ENCODE measurements at regions of chr9 and their contacts with region 1.

Region 1: GRCh38 chr9:69759421-69760277 is at the start of gene PTAR1:
- DNase-seq: peak; percentile 80 to 95 (median 89)
- ATAC-seq: peak; percentile 93
- H3K4me3 ChIP-seq: peak within 1 kb of the TSS; percentile 76
- H3K4me3 Mint-ChIP-seq: peak within 1 kb of the TSS; percentile 87 to 99 (median 96)
- H3K27ac ChIP-seq: peak within 1 kb of the TSS; percentile 93
- H3K27ac Mint-ChIP-seq: peak within 1 kb of the TSS; percentile 85 to 98 (median 94)
- H3K4me1 ChIP-seq: peaks cover 7 to 16% of the 10 kb centered on the region in 2 donors
- H3K4me1 Mint-ChIP-seq: peaks cover 14 to 51% (median 35%) of the 10 kb centered on the region in 7 donors
- H3K27me3 ChIP-seq: no peaks in the 10 kb centered on the region
- H3K27me3 Mint-ChIP-seq: no peaks in the 10 kb centered on the region
- total RNA-seq, gene PTAR1: 59.6 to 82.4 (median 65.7) TPM

Region 2: DNA sequence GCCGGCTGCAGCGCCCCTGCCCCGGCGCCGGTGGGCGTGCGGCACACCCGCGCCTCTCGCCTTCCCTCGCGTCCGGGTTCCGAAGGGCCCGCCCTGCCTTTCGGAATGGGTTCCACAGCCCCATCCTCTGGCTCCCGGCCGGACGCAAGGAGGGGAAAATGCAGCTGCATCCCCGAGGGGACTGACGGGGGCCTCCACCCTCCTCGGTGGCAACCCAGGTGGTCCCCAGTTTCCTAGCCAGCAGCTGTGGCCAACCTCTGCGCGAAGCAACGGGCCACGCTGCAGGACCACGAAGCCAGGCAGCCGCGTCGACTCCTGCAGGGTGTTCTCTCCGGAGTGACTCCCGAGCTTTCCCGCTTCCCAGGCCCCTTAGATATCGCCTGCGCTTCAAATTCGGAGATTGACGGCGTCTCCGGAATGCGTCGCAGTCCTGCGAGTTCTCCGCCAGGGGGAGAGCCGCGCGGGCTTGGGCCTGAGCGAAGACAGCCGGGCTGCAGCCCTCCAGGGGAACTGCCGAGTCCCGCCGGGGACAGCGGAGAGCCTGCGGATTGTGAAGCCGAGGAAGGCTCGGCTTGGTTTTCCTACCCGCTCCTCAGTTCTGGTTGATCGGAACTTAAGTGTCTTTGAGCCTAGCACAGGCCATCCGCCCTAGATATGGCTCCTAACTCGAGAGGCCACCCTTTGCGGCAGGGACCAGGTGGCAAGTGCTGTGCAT is 86.9 kb before region 1 on chr9:
- CTCF ChIA-PET with region 1: no interaction called
- POLR2A ChIA-PET with region 1: interaction called, 5 read pairs
- intact Hi-C with region 1: loop called (anchors 1 kb)
- DNase-seq: peak; percentile 51 to 78 (median 70)
- ATAC-seq: peak; percentile 88
- H3K4me3 ChIP-seq: peak overlapping the region; percentile 84
- H3K4me3 Mint-ChIP-seq: peak overlapping the region; percentile 80 to 91 (median 86)
- H3K27ac ChIP-seq: no peak overlapping the region
- H3K27ac Mint-ChIP-seq: peak overlapping the region in 7 of 9 donors; percentile 17 to 62 (median 59)
- H3K4me1 ChIP-seq: peaks cover 5 to 6% of the 10 kb centered on the region in 2 donors
- H3K4me1 Mint-ChIP-seq: peaks cover 0 to 35% (median 28%) of the 10 kb centered on the region in 7 donors
- H3K27me3 ChIP-seq: no peaks in the 10 kb centered on the region
- H3K27me3 Mint-ChIP-seq: peaks cover 0 to 47% (median 9%) of the 10 kb centered on the region in 5 donors

Region 3: DNA sequence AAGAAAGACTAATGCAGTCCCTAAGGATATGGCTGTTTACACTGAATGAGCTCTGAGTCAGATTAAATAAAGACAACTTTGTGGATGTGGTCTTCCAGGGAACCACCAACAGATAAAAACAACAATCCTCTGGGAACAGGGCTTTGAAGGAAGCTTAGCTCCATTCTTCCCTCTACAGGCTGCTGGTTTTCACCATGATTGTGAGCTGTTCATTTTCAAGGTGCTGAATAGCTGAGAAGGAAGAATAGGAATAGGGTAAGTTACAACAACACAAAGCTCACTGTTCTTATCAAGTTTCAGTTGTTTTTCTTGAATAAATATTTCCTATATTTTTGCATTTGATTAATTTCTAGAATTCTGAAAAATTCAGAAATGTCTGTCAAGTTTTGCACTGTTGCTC is 26.1 kb after region 1 on chr9:
- CTCF ChIA-PET with region 1: no interaction called
- POLR2A ChIA-PET with region 1: no interaction called
- intact Hi-C with region 1: loop called in 1 of 2 experiments (anchors 2 kb)
- DNase-seq: no peak
- ATAC-seq: no peak
- H3K4me3 ChIP-seq: no peak overlapping the region
- H3K4me3 Mint-ChIP-seq: no peak overlapping the region
- H3K27ac ChIP-seq: no peak overlapping the region
- H3K27ac Mint-ChIP-seq: no peak overlapping the region
- H3K4me1 ChIP-seq: no peaks in the 10 kb centered on the region
- H3K4me1 Mint-ChIP-seq: no peaks in the 10 kb centered on the region
- H3K27me3 ChIP-seq: no peaks in the 10 kb centered on the region
- H3K27me3 Mint-ChIP-seq: peaks cover 17 to 39% (median 20%) of the 10 kb centered on the region in 5 donors

Region 4: DNA sequence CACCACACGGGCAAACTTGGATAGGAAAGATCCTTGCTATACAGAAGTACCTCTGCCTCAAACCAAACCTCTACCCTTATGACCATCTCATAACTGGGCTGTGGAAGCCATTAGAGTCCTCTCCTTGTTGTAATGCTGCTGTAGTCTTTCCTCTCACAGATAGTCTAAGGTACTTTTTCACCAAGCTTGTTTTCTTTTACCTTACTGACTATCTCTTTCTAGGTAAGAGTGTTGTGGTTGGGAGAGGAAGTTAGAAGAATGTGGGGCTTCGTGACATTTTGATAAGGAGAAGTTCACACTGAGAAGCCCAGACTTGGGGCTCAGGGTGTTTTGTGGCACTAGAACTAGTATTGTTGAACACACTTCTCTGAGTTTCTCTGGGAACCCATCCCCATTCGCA is 69.8 kb after region 1 on chr9:
- CTCF ChIA-PET with region 1: interaction called, 4 read pairs
- POLR2A ChIA-PET with region 1: no interaction called
- intact Hi-C with region 1: loop called (anchors 2 kb)
- DNase-seq: peak in 6 of 9 donors; percentile 10 to 37 (median 28)
- ATAC-seq: peak; percentile 71
- H3K4me3 ChIP-seq: no peak overlapping the region
- H3K4me3 Mint-ChIP-seq: peak overlapping the region in 8 of 10 donors; percentile 5 to 70 (median 48)
- H3K27ac ChIP-seq: no peak overlapping the region
- H3K27ac Mint-ChIP-seq: peak overlapping the region; percentile 52 to 88 (median 69)
- H3K4me1 ChIP-seq: peaks cover 0 to 9% of the 10 kb centered on the region in 2 donors
- H3K4me1 Mint-ChIP-seq: peaks cover 3 to 55% (median 30%) of the 10 kb centered on the region in 7 donors
- H3K27me3 ChIP-seq: no peaks in the 10 kb centered on the region
- H3K27me3 Mint-ChIP-seq: peaks cover 0 to 3% (median 0%) of the 10 kb centered on the region in 5 donors

Region 5: DNA sequence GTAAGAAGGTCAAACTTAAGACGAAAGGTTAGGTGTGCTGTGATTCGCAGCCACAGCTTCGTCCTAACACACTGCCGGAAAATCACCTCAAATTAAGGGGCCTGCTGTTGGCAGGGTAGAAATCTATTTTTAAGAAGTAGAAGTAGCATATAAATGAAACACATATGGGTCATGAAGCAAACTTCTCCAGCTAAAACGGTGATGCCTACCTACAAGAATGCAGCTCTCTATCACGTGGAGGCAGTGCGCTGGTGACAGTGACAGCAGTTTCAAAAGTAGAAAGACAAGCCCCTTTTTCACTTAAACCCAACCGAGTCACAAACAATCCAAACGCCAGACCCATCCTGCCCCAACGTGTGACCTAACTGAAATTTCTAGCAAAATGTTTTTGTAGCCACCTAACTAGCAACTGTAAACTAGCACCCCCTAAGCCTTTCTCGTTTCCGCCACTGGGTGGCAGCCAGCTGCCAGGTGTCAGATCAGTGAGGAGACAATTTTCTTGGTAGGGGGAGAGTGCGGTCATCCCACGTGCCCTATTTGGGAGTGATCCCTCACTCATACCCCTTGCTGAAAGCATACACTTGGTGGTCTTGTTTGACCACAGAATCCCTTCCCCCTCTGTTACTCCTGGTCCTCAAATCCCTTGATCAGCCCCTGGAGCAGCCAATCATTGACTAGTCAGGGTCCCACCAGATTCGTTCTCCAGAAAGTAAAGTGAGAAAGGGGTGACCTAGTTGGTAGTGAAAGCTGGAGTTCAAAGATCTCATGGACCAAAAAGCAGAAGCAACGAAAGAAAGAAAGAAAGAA is 212.2 kb after region 1 on chr9:
- CTCF ChIA-PET with region 1: no interaction called
- POLR2A ChIA-PET with region 1: no interaction called
- intact Hi-C with region 1: no loop called
- DNase-seq: peak in 7 of 9 donors; percentile 18 to 37 (median 27)
- ATAC-seq: peak; percentile 52
- H3K4me3 ChIP-seq: no peak overlapping the region
- H3K4me3 Mint-ChIP-seq: no peak overlapping the region
- H3K27ac ChIP-seq: no peak overlapping the region
- H3K27ac Mint-ChIP-seq: no peak overlapping the region
- H3K4me1 ChIP-seq: no peaks in the 10 kb centered on the region
- H3K4me1 Mint-ChIP-seq: peaks cover 0 to 4% (median 0%) of the 10 kb centered on the region in 7 donors
- H3K27me3 ChIP-seq: no peaks in the 10 kb centered on the region
- H3K27me3 Mint-ChIP-seq: peaks cover 5 to 19% (median 15%) of the 10 kb centered on the region in 5 donors